ENCODE measurements at regions of chr11 and their contacts with region 1.

Region 1: DNA sequence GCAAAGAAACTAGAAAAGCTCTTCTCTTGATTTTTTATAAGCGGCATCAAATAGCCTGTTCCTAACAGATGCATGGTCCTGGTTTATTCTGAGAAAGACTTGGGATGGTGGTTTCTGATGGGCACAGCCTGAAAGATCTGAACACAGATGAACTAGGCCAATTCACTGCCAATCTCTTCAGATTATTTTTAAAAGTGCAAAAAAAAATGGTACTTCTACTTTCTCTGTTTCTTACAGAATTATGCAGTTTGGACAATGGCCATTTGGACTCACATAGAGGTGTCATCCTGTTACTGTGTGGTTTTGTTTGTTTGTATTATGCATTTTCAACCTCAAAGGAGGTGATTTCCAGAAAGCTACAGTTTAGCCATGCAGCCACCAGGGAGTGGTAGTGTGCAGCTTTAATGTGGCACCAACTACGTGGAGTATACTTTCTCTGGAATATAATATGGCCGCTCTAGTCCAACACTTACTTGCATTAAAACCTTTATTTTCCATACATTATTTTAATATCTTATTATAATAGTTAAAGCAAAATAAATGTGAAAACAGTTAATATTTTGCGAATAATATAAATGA is 469.8 kb upstream of the KIRREL3 start:
- DNase-seq: peak; percentile 2
- H3K4me3 ChIP-seq: no peak overlapping the region
- H3K27ac ChIP-seq: no peak overlapping the region
- H3K4me1 ChIP-seq: no peaks in the 10 kb centered on the region
- H3K27me3 ChIP-seq: no peaks in the 10 kb centered on the region
- CTCF ChIP-seq: peak in 1 of 2 donors; percentile 19
- POLR2A ChIP-seq: no peak

Region 2: GRCh38 chr11:127601578-127601977 is 131.2 kb after region 1 on chr11:
- CTCF ChIA-PET with region 1: no interaction called
- POLR2A ChIA-PET with region 1: no interaction called
- dilution Hi-C with region 1: no loop called
- intact Hi-C with region 1: no loop called
- DNase-seq: no peak
- H3K4me3 ChIP-seq: no peak overlapping the region
- H3K27ac ChIP-seq: no peak overlapping the region
- H3K4me1 ChIP-seq: no peaks in the 10 kb centered on the region
- H3K27me3 ChIP-seq: no peaks in the 10 kb centered on the region
- CTCF ChIP-seq: no peak
- POLR2A ChIP-seq: no peak

Region 3: DNA sequence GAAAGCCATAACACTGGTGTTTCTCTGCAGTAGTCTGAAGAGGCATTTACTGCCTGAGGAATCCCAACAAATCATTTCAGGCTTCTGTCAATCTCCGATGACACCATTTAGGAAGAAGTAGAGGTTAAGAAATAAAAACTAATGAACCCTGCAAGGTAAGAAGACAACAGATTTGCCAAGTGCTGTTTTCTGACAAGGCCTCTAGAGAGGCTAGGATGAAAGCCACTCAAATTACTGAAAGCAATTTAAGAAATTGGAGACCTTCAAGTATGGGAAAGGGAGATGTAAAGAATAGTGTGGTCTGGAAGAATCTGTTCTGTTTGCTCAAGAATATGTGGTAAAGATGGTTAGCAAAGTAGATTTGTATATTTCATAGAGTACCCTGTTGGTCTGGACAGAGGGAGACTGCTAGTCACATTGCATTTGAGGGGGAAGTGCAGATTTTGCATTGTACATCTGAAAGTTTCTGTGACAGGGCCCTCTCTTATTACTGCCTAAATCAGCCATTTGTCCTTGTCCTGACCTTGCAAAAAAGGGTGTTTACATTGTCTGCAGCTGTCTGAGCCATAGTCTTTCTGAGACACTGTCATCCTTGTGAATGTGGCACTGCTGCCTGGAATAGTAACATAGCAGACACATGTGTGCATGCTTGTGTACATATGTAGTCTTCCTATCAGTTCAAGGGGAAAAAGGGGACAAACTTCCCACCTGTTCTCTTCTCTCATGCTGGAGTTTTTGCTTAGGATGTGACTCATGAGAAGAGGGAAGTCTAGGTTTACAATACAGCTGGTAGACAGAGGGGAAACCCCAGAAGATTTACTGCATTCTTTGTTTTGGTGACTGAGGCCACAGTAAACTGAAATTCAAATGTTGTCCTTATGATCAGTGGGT is 170.4 kb after region 1 on chr11:
- CTCF ChIA-PET with region 1: no interaction called
- POLR2A ChIA-PET with region 1: no interaction called
- dilution Hi-C with region 1: no loop called
- intact Hi-C with region 1: no loop called
- DNase-seq: peak; percentile 93
- H3K4me3 ChIP-seq: no peak overlapping the region
- H3K27ac ChIP-seq: peak overlapping the region; percentile 86
- H3K4me1 ChIP-seq: peaks cover 28% of the 10 kb centered on the region
- H3K27me3 ChIP-seq: no peaks in the 10 kb centered on the region
- CTCF ChIP-seq: no peak
- POLR2A ChIP-seq: no peak

Region 4: GRCh38 chr11:127789927-127790326 is 319.5 kb after region 1 on chr11:
- CTCF ChIA-PET with region 1: no interaction called
- POLR2A ChIA-PET with region 1: no interaction called
- dilution Hi-C with region 1: no loop called
- intact Hi-C with region 1: loop called (anchors 2 kb)
- DNase-seq: no peak
- H3K4me3 ChIP-seq: no peak overlapping the region
- H3K27ac ChIP-seq: no peak overlapping the region
- H3K4me1 ChIP-seq: no peaks in the 10 kb centered on the region
- H3K27me3 ChIP-seq: no peaks in the 10 kb centered on the region
- CTCF ChIP-seq: peak; percentile 7 to 20
- POLR2A ChIP-seq: no peak